Tibial artery (tissue), 4 donors: ENCODE measurements at regions of chr19 and their contacts with region 1.

Region 1: DNA sequence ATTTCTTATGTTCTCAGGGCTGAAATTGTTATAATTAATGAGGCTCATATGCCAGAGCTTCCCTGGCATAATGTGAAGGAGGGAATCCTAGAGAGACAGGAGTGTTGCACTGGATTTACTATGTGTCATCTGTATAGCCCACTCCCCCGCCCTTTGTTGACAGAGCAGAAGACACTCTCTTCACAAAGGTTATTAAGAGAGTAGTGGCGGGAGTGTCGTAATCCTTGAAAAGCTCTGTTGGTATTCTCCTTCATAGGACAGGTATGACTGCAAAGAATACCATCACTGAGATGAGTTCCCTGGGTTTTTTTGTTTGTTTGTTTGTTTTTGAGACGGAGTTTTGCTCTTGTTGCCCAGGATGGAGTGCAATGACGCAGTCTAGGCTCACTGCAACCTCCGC is 14.0 kb downstream of the ZNF121 start:
- DNase-seq: no peak
- H3K4me3 ChIP-seq: no peak overlapping the region
- H3K27ac ChIP-seq: no peak overlapping the region
- H3K4me1 ChIP-seq: no peaks in the 10 kb centered on the region
- H3K27me3 ChIP-seq: no peaks in the 10 kb centered on the region
- CTCF ChIP-seq: no peak

Region 2: GRCh38 chr19:9219489-9219888 is 350.8 kb before region 1 on chr19 and contains the start of gene OR7D4:
- intact Hi-C with region 1: no loop called
- DNase-seq: no peak
- H3K4me3 ChIP-seq: no peak within 1 kb of the TSS
- H3K27ac ChIP-seq: no peak within 1 kb of the TSS
- H3K4me1 ChIP-seq: no peaks in the 10 kb centered on the region
- H3K27me3 ChIP-seq: peaks cover 0 to under 1% of the 10 kb centered on the region in 2 donors
- CTCF ChIP-seq: no peak

Region 3: GRCh38 chr19:9991425-9992191 is 421.4 kb after region 1 on chr19:
- intact Hi-C with region 1: loop called (anchors 5 kb)
- DNase-seq: no peak
- H3K4me3 ChIP-seq: no peak overlapping the region
- H3K27ac ChIP-seq: no peak overlapping the region
- H3K4me1 ChIP-seq: peaks cover 0 to 11% (median 6%) of the 10 kb centered on the region in 4 donors
- H3K27me3 ChIP-seq: no peaks in the 10 kb centered on the region
- CTCF ChIP-seq: no peak